Caco-2 (cell line): ENCODE measurements at regions of chr5 and their contacts with region 1.

Region 1: DNA sequence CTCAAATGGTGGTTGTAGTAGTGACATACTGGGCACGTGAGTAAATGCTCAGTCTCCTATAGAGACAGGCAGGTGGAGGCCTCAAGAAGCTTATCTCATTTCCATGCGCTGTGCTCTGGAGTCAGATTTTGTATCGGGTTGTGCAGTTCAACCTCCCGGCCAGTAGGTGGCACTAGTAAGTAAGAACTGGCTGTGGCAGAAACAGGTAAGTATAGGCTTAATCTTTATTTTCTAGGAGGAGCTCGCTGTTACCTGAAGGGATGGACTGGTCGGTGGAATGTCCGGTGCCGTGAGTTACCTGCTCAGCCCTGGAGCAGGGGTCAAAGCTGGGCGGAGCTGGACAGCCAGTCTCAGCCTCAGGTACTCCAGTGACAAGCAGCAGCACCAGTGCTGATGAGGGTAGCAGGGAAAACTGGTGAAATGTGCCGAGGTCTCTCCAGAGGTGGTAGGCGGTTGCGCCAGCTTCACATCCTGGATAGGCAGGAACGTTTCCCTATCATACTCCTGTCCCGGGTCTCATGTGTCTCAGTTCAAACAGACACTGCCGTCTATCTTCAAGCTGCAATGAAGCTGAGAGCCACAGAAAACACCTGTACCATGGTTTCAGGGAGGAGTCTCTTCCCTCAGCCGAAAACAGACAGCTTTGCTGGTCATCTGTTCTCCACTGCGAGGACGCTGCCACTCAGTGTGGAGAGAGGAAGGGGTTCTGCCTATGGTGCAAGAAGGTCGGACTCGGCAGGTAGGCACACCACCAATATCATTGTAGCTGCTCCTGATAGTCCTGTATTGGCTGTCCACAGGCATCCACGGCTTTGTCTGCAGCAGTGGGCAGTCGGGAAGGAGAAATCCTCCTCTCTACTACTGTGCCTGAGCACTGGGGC is 880.3 kb upstream of the SEMA6A start:
- DNase-seq: peak; percentile 88 to 90
- H3K4me3 ChIP-seq: peak overlapping the region; percentile 68
- H3K4me3 Mint-ChIP-seq: peak overlapping the region; percentile 85
- H3K27ac Mint-ChIP-seq: peak overlapping the region; percentile 26
- H3K4me1 ChIP-seq: peaks cover 5% of the 10 kb centered on the region; the same call in 1 of the 2 replicates
- H3K4me1 Mint-ChIP-seq: peaks cover 6% of the 10 kb centered on the region
- H3K27me3 ChIP-seq: no peaks in the 10 kb centered on the region; the same call in 1 of the 2 replicates
- H3K27me3 Mint-ChIP-seq: peaks cover 3% of the 10 kb centered on the region
- CTCF ChIP-seq: peak; percentile 88 to 91

Region 2: DNA sequence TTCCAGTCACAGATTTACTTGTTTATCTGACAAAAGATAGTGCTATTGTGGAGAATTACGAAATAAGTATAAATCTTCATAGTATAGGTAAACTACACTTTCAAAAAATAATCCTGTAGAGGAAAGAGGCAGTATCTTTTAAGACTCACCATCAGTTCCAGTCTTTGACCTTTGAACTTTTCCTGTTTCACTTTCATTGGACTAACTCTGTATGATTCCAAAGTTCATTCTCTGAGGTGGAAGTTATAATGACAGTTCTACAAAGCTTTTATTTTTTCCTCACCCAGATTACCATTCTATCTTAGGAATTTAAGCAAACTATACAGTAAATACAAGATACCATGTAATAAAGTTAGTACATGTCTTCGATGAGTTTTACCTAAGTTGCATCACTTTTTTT is 21.0 kb after region 1 on chr5:
- CTCF ChIA-PET with region 1: interaction called, 11 read pairs
- POLR2A ChIA-PET with region 1: no interaction called
- intact Hi-C with region 1: no loop called
- DNase-seq: peak in 1 of 2 experiments; percentile 10
- H3K4me3 ChIP-seq: no peak overlapping the region
- H3K4me3 Mint-ChIP-seq: no peak overlapping the region
- H3K27ac Mint-ChIP-seq: no peak overlapping the region
- H3K4me1 ChIP-seq: peaks cover 14% of the 10 kb centered on the region
- H3K4me1 Mint-ChIP-seq: no peaks in the 10 kb centered on the region
- H3K27me3 ChIP-seq: no peaks in the 10 kb centered on the region
- H3K27me3 Mint-ChIP-seq: no peaks in the 10 kb centered on the region
- CTCF ChIP-seq: no peak

Region 3: DNA sequence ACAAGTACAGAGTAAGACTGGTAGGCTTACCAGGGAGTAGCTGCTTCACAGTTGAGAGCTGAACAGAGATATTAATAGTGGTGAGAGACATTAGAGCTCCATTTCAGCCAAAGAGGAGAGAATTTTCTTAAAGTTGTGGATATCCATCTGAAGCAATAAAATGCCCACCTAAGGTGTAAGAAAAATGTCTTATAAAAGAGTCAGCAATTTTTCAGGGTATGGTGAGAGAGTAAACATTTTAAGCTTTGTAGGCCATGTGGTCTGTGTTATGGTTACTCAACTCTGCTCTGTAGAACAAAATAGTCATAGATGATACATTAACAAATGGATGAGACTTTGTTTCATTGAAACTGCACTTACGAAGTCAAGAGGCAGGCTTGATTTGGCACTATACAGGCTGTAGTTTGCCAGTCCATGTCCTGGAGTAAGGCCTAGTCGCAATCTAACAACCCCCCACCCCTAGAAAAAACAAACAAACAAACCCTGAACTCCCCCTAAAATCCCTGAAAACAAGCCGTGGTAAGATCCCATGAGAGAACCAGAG is 65.1 kb after region 1 on chr5:
- CTCF ChIA-PET with region 1: no interaction called
- POLR2A ChIA-PET with region 1: no interaction called
- intact Hi-C with region 1: loop called (anchors 2 kb)
- DNase-seq: no peak
- H3K4me3 ChIP-seq: no peak overlapping the region
- H3K4me3 Mint-ChIP-seq: no peak overlapping the region
- H3K27ac Mint-ChIP-seq: no peak overlapping the region
- H3K4me1 ChIP-seq: no peaks in the 10 kb centered on the region
- H3K4me1 Mint-ChIP-seq: no peaks in the 10 kb centered on the region
- H3K27me3 ChIP-seq: no peaks in the 10 kb centered on the region
- H3K27me3 Mint-ChIP-seq: no peaks in the 10 kb centered on the region
- CTCF ChIP-seq: no peak

Region 4: GRCh38 chr5:117590944-117591343 is 136.0 kb after region 1 on chr5:
- CTCF ChIA-PET with region 1: interaction called, 7 read pairs
- POLR2A ChIA-PET with region 1: no interaction called
- intact Hi-C with region 1: loop called (anchors 10 kb)
- DNase-seq: peak in 1 of 2 experiments; percentile 32
- H3K4me3 ChIP-seq: no peak overlapping the region
- H3K4me3 Mint-ChIP-seq: no peak overlapping the region
- H3K27ac Mint-ChIP-seq: no peak overlapping the region
- H3K4me1 ChIP-seq: no peaks in the 10 kb centered on the region
- H3K4me1 Mint-ChIP-seq: no peaks in the 10 kb centered on the region
- H3K27me3 ChIP-seq: no peaks in the 10 kb centered on the region
- H3K27me3 Mint-ChIP-seq: peaks cover 7% of the 10 kb centered on the region
- CTCF ChIP-seq: peak; percentile 44 to 50

Region 5: DNA sequence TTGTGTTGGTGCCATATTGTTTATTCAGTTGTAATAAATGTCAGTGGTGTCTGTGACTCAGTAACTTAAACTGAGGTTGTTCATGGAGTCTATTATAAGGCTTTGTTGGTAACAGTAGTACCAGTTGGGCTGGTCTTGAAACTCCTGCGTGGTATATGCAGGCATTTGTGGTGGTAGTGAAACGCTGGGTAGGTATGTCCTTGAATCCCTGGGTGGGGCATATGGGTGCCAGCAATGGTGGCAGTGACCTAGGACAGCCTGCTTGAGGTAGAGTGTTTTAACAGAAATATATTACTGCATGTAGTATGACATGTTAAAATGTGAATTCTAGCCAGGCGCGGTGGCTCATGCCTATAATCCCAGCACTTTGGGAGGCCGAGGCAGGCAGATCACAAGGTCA is 178.2 kb after region 1 on chr5:
- CTCF ChIA-PET with region 1: no interaction called
- POLR2A ChIA-PET with region 1: no interaction called
- intact Hi-C with region 1: no loop called
- DNase-seq: no peak
- H3K4me3 ChIP-seq: no peak overlapping the region
- H3K4me3 Mint-ChIP-seq: no peak overlapping the region
- H3K27ac Mint-ChIP-seq: no peak overlapping the region
- H3K4me1 ChIP-seq: no peaks in the 10 kb centered on the region
- H3K4me1 Mint-ChIP-seq: no peaks in the 10 kb centered on the region
- H3K27me3 ChIP-seq: no peaks in the 10 kb centered on the region
- H3K27me3 Mint-ChIP-seq: no peaks in the 10 kb centered on the region
- CTCF ChIP-seq: no peak

Region 6: DNA sequence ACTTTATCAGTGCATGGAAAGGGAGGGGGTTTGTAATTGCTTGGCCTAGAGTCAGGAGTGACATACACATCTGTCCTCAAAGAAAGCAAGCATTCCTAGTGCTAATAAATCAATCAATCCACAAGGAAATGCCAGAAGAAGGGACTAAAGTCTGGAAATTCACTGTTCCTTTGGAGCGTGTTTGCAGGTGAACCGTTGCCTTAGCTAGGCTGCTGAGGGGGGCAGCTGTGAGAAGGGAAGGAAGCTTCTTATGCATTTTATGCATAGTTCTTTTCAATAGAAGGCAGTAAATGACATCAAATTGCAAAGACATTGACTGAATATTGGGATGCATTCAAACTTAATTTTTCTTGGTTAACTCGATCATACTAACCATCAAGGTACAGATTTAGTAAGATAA is 212.1 kb after region 1 on chr5:
- CTCF ChIA-PET with region 1: no interaction called
- POLR2A ChIA-PET with region 1: no interaction called
- intact Hi-C with region 1: no loop called
- DNase-seq: no peak
- H3K4me3 ChIP-seq: no peak overlapping the region
- H3K4me3 Mint-ChIP-seq: no peak overlapping the region
- H3K27ac Mint-ChIP-seq: no peak overlapping the region
- H3K4me1 ChIP-seq: no peaks in the 10 kb centered on the region
- H3K4me1 Mint-ChIP-seq: no peaks in the 10 kb centered on the region
- H3K27me3 ChIP-seq: no peaks in the 10 kb centered on the region
- H3K27me3 Mint-ChIP-seq: no peaks in the 10 kb centered on the region
- CTCF ChIP-seq: no peak

Region 7: GRCh38 chr5:117788594-117788993 is 333.6 kb after region 1 on chr5:
- CTCF ChIA-PET with region 1: no interaction called
- POLR2A ChIA-PET with region 1: no interaction called
- intact Hi-C with region 1: loop called (anchors 1 kb)
- DNase-seq: no peak
- H3K4me3 ChIP-seq: no peak overlapping the region
- H3K4me3 Mint-ChIP-seq: no peak overlapping the region
- H3K27ac Mint-ChIP-seq: no peak overlapping the region
- H3K4me1 ChIP-seq: no peaks in the 10 kb centered on the region
- H3K4me1 Mint-ChIP-seq: no peaks in the 10 kb centered on the region
- H3K27me3 ChIP-seq: no peaks in the 10 kb centered on the region
- H3K27me3 Mint-ChIP-seq: no peaks in the 10 kb centered on the region
- CTCF ChIP-seq: no peak

Region 8: GRCh38 chr5:117999939-118000549 is 545.1 kb after region 1 on chr5:
- CTCF ChIA-PET with region 1: no interaction called
- POLR2A ChIA-PET with region 1: no interaction called
- intact Hi-C with region 1: no loop called
- DNase-seq: no peak
- H3K4me3 ChIP-seq: no peak overlapping the region
- H3K4me3 Mint-ChIP-seq: no peak overlapping the region
- H3K27ac Mint-ChIP-seq: no peak overlapping the region
- H3K4me1 ChIP-seq: no peaks in the 10 kb centered on the region
- H3K4me1 Mint-ChIP-seq: no peaks in the 10 kb centered on the region
- H3K27me3 ChIP-seq: no peaks in the 10 kb centered on the region
- H3K27me3 Mint-ChIP-seq: peaks cover 18% of the 10 kb centered on the region
- CTCF ChIP-seq: no peak

Region 9: GRCh38 chr5:118144540-118144939 is 689.6 kb after region 1 on chr5:
- CTCF ChIA-PET with region 1: no interaction called
- POLR2A ChIA-PET with region 1: no interaction called
- intact Hi-C with region 1: loop called (anchors 10 kb)
- DNase-seq: no peak
- H3K4me3 ChIP-seq: no peak overlapping the region
- H3K4me3 Mint-ChIP-seq: no peak overlapping the region
- H3K27ac Mint-ChIP-seq: no peak overlapping the region
- H3K4me1 ChIP-seq: peaks cover 7% of the 10 kb centered on the region
- H3K4me1 Mint-ChIP-seq: no peaks in the 10 kb centered on the region
- H3K27me3 ChIP-seq: no peaks in the 10 kb centered on the region
- H3K27me3 Mint-ChIP-seq: no peaks in the 10 kb centered on the region
- CTCF ChIP-seq: no peak